ENCODE measurements at regions of chr20 and their contacts with region 1.

Region 1: DNA sequence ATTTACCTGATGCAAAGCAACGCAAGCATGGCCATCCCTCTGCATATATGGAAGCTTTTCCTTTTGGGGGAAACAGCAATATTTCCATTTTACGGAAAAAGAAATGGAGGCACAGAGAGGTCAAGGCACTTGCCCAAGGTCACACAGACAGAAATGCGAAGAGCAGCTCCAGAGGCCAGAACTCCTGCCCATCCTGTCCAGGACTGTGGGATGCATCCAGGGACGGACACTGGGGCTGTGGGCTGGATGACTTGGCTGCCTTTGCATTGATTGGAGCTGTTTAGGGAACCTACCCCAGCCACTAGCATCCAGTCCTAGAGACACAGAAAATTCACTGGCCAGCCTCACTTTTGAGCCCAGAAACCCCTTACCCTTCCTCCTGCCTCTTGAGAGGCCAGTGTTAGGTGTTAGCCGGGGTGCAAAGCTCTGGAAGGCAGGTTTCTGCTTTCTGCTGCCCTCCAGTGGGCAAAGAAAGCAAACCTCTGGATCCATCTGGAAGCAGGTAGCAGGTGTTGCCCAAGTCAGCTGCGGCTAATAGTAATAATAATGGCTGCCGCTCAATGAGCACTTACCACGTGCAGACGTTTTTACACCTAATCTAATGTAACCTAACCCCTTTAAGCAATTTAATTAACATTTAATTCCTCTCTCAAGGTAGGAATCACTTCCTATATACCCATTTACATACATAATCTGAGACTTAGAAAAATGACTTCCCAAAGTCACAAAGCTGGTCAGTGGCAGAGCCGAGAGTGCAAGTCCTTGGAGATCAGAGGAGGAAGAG is 31.7 kb upstream of the CCN5 start:
- DNase-seq: peak in 1 of 2 donors; percentile 56
- ATAC-seq: peak; percentile 76

Region 2: GRCh38 chr20:44388466-44389023 is 294.9 kb before region 1 on chr20:
- intact Hi-C with region 1: loop called in 1 of 2 experiments (anchors 5 kb)
- DNase-seq: peak; percentile 76 to 87
- ATAC-seq: peak; percentile 65

Region 3: DNA sequence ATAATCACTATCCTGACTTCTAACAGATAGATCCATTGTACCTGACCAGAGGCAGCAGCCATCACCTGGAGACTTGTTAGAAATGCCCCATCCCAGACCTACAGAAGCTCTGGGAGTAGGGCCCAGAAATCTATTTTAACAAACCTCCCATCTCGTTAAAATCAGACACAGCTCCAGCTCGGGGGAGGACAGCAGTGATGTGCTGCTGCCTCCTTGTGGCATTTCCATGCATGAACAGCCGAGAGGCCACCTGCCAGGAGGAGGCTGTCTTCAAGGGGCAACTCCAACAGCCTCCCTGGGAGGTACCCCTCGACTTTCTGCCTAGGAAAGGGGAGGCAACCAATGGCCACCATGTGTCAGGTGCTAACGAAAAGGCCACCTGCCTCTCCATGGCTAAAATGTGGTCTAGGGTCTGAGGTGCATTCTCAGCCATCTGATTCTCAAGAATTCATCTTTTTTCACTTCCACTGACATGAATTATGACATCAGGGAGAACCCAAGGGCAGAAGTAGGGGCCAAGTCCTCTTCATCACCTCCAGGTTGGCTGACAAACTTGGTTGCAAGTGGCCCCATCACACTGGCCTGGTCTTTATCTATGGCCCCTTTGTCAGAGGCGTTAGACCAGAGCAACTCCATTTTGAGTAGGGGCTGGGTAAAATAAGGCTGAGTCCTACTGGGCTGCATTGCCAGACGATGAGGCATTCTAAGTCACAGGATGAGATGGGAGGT is 50.0 kb after region 1 on chr20:
- intact Hi-C with region 1: loop called in 1 of 2 experiments (anchors 2 kb)
- DNase-seq: peak in 1 of 2 donors; percentile 63
- ATAC-seq: peak; percentile 52

Region 4: DNA sequence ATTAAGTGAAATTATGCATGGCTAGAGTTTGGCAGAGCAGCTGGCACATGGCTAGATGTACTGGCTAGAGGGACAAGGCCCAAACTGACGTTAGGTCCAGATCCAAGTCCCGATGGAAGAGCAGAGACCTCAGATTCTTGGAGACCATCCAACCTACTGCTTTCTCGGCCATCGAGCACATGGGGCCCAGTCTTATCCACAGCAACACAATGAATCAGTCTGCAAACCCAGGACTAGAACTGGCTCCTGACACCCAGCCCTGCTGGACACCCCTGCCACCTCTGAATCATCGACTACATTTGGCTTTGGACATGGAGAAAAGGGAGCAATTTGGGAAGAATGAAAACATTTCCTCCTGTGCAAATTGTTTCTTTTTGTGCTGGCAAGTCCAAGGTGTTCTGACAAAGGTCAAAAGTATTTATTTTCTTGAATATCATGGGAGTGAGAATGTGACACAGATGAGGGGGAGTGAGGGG is 178.1 kb after region 1 on chr20:
- intact Hi-C with region 1: loop called in 1 of 2 experiments (anchors 10 kb)
- DNase-seq: no peak
- ATAC-seq: no peak